Activated T-helper 1 cell treated with anti-CD3 and anti-CD28 coated beads, Interleukin-12 subunit alpha, Interleukin-12 subunit beta, Interleukin-2, Interleukin-4 antibody, amounts not matched to agents 30 ng/mL and 10 ng/mL and 1 ng/mL, durations not matched to agents 14 hours and 24 hours and 36 hours (primary cell): ENCODE measurements at regions of chr18 and their contacts with region 1.

Region 1: GRCh38 chr18:58541789-58542425 is 87.0 kb downstream of the ALPK2 start:
- DNase-seq: peak; percentile 57
- H3K4me3 Mint-ChIP-seq: peak overlapping the region; percentile 19
- H3K27ac Mint-ChIP-seq: peak overlapping the region; percentile 57
- H3K4me1 Mint-ChIP-seq: peaks cover 92% of the 10 kb centered on the region
- H3K27me3 Mint-ChIP-seq: peaks cover 4% of the 10 kb centered on the region

Region 2: DNA sequence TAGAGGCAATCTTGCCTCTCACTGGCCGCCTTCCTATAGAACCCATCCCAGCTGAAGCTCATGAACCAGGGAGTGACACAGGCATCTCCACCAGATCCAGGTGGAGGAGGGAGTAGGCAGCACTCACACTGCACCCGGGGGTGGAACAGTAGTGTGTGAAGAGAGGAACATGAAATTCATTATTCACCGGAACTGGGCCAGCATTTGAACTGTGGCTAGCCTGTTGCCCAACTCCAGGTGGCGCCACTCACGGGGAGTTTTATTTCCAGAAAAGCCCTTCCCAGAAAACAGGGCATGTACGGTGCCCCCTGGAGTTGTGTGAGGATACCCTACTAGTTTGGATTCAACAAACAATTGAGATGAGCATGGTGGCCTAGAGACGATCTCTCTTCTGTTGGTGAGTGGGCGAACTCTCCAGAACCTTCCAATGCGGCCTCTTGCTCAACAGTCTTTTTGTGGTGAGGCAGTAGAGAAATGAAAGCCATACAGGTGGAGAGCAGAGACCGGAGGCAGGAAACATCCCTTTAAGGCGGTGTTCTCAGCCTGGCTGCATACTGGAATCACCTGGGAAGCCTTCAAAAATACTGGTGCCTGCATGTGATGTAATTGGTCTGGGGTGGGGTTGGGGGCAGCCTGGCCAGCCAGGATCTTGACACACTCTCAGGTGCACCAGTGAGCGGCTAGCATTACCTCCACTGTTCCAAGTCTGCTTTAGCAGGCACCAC is 571.4 kb before region 1 on chr18:
- intact Hi-C with region 1: no loop called
- DNase-seq: no peak
- H3K4me3 Mint-ChIP-seq: no peak overlapping the region
- H3K27ac Mint-ChIP-seq: no peak overlapping the region
- H3K4me1 Mint-ChIP-seq: peaks cover 5% of the 10 kb centered on the region
- H3K27me3 Mint-ChIP-seq: peaks cover 4% of the 10 kb centered on the region

Region 3: DNA sequence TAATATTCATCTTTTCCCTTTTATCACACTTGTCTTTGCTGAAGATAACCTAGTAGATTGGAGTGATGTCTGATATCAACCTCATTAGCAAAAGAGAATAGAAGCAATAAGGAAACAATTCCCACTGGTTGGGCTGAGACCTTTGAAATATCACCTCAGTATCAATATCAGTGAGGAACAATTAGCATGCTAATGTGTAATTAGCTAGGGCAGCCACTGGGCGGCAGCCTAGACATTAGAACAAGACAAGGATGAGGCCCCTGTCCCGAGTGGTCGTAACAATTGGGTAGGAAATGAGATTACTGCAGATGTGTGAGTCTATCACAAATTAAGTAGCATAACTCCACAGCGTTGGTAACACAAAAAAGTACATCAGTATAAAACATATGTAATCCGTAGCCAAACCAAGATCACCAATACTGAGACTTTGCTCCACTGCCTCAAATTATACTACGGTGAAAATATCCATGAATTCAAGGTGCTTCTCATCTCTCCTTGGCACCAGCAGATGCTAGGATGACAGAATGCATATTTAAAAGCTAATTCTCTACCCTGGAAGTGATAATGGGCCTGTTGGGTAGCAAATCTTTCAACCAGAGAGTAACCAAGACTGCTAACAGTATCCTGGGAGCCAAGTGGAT is 12.1 kb before region 1 on chr18:
- intact Hi-C with region 1: loop called (anchors 1 kb)
- DNase-seq: peak; percentile 43
- H3K4me3 Mint-ChIP-seq: no peak overlapping the region
- H3K27ac Mint-ChIP-seq: no peak overlapping the region
- H3K4me1 Mint-ChIP-seq: peaks cover 26% of the 10 kb centered on the region
- H3K27me3 Mint-ChIP-seq: peaks cover 10% of the 10 kb centered on the region

Region 4: GRCh38 chr18:58572181-58572580 is 30.3 kb after region 1 on chr18:
- intact Hi-C with region 1: loop called (anchors 2 kb)
- DNase-seq: no peak
- H3K4me3 Mint-ChIP-seq: no peak overlapping the region
- H3K27ac Mint-ChIP-seq: no peak overlapping the region
- H3K4me1 Mint-ChIP-seq: peaks cover 8% of the 10 kb centered on the region
- H3K27me3 Mint-ChIP-seq: peaks cover 2% of the 10 kb centered on the region

Region 5: GRCh38 chr18:58615140-58616132 is 73.5 kb after region 1 on chr18:
- intact Hi-C with region 1: loop called (anchors 1 kb)
- DNase-seq: peak; percentile 71
- H3K4me3 Mint-ChIP-seq: peak overlapping the region; percentile 63
- H3K27ac Mint-ChIP-seq: peak overlapping the region; percentile 96
- H3K4me1 Mint-ChIP-seq: peaks cover 41% of the 10 kb centered on the region
- H3K27me3 Mint-ChIP-seq: peaks cover 8% of the 10 kb centered on the region

Region 6: GRCh38 chr18:58671111-58671631 is 129.3 kb after region 1 on chr18 and contains the start of gene MALT1:
- intact Hi-C with region 1: loop called (anchors 1 kb)
- DNase-seq: peak; percentile 93
- H3K4me3 Mint-ChIP-seq: peak within 1 kb of the TSS; percentile 91
- H3K27ac Mint-ChIP-seq: peak within 1 kb of the TSS; percentile 90
- H3K4me1 Mint-ChIP-seq: peaks cover 66% of the 10 kb centered on the region
- H3K27me3 Mint-ChIP-seq: no peaks in the 10 kb centered on the region
- total RNA-seq, gene MALT1: 32.4 and 34.1 TPM in 2 replicates

Region 7: DNA sequence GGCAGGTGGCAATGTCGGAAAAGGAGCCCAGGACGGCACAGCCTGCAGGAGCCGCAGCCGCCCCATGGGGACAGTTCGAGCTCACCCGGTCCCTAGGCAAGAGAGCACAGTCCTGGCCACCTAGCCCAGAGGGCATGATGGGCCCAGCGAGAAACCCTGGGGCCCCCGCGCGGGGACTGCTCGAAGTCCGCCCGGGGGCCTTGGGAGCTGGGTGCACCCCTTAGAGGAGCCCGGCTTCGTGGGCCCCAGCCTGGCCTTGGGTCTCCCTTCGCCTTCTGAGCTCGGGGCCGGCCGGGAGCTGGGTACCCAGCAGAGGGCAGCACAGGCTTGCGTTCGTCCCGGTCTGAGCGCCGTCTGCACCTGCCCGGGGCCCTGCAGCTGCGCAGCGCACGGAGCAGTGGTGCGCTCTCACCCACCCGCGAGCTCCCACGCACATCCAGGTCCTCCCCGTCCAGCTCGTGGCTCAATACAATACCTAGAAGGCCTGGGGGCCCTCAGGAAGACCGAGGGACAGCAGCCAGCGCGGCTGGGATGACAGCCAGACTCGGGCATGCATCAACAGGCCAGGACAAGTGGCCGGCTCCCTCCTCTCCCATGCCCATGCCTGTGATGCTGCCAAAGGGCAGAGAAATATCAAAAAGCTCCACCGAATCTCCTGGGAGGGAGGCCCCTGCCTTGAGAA is 226.5 kb after region 1 on chr18:
- intact Hi-C with region 1: loop called (anchors 1 kb)
- DNase-seq: peak; percentile 53
- H3K4me3 Mint-ChIP-seq: no peak overlapping the region
- H3K27ac Mint-ChIP-seq: no peak overlapping the region
- H3K4me1 Mint-ChIP-seq: peaks cover 9% of the 10 kb centered on the region
- H3K27me3 Mint-ChIP-seq: peaks cover 49% of the 10 kb centered on the region

Region 8: DNA sequence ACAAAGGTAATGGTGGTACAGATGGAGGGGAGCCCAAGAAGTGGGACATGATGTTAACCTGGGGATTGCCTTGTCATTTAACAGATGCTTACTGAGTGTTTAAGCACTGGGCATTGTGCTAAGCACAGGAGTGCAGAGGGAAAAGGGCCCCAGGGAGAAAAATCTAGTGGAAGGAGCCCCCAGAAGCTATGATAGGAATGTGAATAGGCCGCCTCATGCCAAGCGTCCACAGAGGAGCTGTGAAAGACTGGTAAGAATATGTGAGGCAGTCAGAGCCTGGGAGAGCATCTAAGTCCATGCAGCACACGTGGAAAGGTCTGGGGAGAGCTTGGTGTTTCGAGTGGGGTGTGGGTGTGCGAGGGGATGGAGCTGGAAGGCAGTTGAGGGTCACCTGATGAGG is 328.2 kb after region 1 on chr18:
- intact Hi-C with region 1: no loop called
- DNase-seq: no peak
- H3K4me3 Mint-ChIP-seq: no peak overlapping the region
- H3K27ac Mint-ChIP-seq: no peak overlapping the region
- H3K4me1 Mint-ChIP-seq: no peaks in the 10 kb centered on the region
- H3K27me3 Mint-ChIP-seq: peaks cover 35% of the 10 kb centered on the region

Region 9: GRCh38 chr18:59109375-59109774 is 567.5 kb after region 1 on chr18:
- intact Hi-C with region 1: no loop called
- DNase-seq: no peak
- H3K4me3 Mint-ChIP-seq: no peak overlapping the region
- H3K27ac Mint-ChIP-seq: no peak overlapping the region
- H3K4me1 Mint-ChIP-seq: no peaks in the 10 kb centered on the region
- H3K27me3 Mint-ChIP-seq: peaks cover 18% of the 10 kb centered on the region

Region 10: DNA sequence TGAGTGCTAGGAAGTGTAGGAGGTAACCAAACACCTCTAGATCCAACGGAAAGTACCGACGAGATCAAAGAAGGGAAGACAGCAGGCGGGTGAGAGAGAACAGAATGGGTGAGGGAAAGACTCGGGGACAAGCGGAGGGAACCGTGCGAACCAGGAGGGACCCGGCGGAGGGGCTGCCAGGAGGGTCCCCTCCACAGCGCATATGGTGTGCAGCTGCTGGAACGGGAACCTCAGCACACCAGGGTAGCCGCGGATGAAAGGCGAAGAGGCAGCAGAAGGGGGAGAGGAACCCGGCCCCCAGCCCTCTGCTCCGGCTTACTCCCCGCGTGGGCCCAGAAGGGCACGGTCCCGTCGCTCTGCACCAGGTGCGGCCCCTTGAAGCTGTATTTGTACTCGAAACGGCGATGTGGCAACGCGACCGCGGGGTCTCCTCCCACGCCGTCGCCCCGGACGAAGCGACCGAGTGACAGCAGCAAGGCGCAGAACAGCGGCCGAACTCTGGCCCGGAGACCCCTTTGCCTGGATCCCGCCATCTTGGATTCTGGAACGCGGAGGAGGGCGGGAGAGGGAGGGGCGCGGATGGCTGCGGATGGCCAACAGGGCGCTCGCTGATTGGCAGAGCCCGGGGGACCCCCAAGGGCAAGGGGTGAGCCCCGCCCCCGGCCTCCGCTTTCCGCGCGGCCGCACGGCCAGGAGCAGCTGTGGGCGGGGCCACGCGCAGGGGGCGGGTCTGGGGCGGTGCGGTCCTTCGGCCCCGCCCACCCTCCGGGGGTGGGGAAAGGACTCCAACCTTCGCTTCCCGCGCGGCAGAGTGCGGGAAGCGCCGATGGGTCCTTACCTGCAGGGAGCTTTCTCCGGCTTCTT is 817.0 kb after region 1 on chr18 and contains the start of gene LMAN1:
- intact Hi-C with region 1: loop called (anchors 10 kb)
- DNase-seq: peak; percentile 92
- H3K4me3 Mint-ChIP-seq: peak within 1 kb of the TSS; percentile 99
- H3K27ac Mint-ChIP-seq: peak within 1 kb of the TSS; percentile 100
- H3K4me1 Mint-ChIP-seq: peaks cover 27% of the 10 kb centered on the region
- H3K27me3 Mint-ChIP-seq: no peaks in the 10 kb centered on the region
- total RNA-seq, gene LMAN1: 147 and 175 TPM in 2 replicates